ENCODE measurements at regions of chr6 and their contacts with region 1.

Region 1: GRCh38 chr6:158072083-158072721 is 90.5 kb downstream of the SYNJ2 start:
- DNase-seq: peak in 2 of 3 donors; percentile 81 to 83
- ATAC-seq: peak; percentile 67
- H3K4me3 ChIP-seq: no peak overlapping the region
- H3K4me1 ChIP-seq: peaks cover 16% of the 10 kb centered on the region
- CTCF ChIP-seq: peak; percentile 69

Region 2: DNA sequence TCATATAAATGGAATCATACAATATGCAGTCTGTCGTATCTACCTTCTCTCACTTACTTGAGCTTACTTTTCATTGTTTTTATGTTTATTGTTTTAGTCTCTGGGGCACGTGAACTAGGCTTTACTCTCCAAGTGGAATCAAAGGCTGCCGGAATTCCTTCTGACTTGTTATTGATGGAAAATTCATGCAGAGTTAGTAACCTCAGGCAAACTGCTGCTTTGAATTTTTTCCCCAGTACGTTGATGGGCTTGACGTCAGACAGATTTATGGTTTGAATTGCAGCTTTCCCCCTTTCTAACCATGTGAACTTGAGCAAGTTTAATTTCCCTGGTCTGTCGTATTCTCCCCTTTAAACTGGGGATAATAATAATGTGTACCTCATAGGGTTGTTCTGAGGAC is 622.6 kb before region 1 on chr6:
- intact Hi-C with region 1: no loop called
- DNase-seq: no peak
- ATAC-seq: peak; percentile 36
- H3K4me3 ChIP-seq: no peak overlapping the region
- H3K4me1 ChIP-seq: peaks cover 11% of the 10 kb centered on the region
- CTCF ChIP-seq: no peak

Region 3: GRCh38 chr6:157954150-157955117 is 117.8 kb before region 1 on chr6:
- intact Hi-C with region 1: loop called in 1 of 2 experiments (anchors 10 kb)
- DNase-seq: peak; percentile 90 to 93 (median 92)
- ATAC-seq: peak; percentile 87
- H3K4me3 ChIP-seq: no peak overlapping the region
- H3K4me1 ChIP-seq: peaks cover 31% of the 10 kb centered on the region
- CTCF ChIP-seq: no peak

Measured in mucosa of descending colon (tissue), 3 donors.